Activated T-helper 1 cell treated with anti-CD3 and anti-CD28 coated beads, Interleukin-12 subunit alpha, Interleukin-12 subunit beta, Interleukin-2, Interleukin-4 antibody, amounts not matched to agents 30 ng/mL and 10 ng/mL and 1 ng/mL, durations not matched to agents 14 hours and 24 hours and 36 hours (primary cell): ENCODE measurements at regions of chr1 and their contacts with region 1.

Region 1: GRCh38 chr1:214584805-214585766 is 17.9 kb upstream of the CENPF start:
- DNase-seq: no peak
- H3K4me3 Mint-ChIP-seq: no peak overlapping the region
- H3K27ac Mint-ChIP-seq: no peak overlapping the region
- H3K4me1 Mint-ChIP-seq: peaks cover 10% of the 10 kb centered on the region
- H3K27me3 Mint-ChIP-seq: peaks cover 3% of the 10 kb centered on the region

Region 2: DNA sequence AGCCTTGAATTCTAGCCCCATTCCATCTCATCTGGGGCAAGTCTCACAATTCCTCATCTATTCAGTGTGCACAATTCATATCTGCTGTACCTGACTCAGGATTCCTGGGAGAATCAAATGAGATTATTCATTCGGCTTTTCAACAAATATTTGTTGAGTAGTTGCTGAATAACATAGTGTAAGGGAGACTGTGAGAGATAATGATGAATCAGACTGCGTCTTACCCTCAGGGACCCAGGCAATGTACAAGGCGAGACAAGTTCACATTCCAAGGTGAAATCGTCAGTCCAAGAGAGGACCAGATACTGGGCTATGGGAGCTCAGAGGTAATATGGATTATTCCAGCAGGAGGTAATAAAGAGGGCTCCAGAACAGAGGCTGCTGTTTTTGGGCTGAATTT is 371.9 kb before region 1 on chr1:
- intact Hi-C with region 1: loop called (anchors 2 kb)
- DNase-seq: no peak
- H3K4me3 Mint-ChIP-seq: no peak overlapping the region
- H3K27ac Mint-ChIP-seq: no peak overlapping the region
- H3K4me1 Mint-ChIP-seq: no peaks in the 10 kb centered on the region
- H3K27me3 Mint-ChIP-seq: peaks cover 20% of the 10 kb centered on the region

Region 3: GRCh38 chr1:214261206-214262123 is 323.6 kb before region 1 on chr1:
- intact Hi-C with region 1: loop called (anchors 1 kb)
- DNase-seq: peak; percentile 69
- H3K4me3 Mint-ChIP-seq: no peak overlapping the region
- H3K27ac Mint-ChIP-seq: no peak overlapping the region
- H3K4me1 Mint-ChIP-seq: peaks cover 27% of the 10 kb centered on the region
- H3K27me3 Mint-ChIP-seq: peaks cover 42% of the 10 kb centered on the region

Region 4: GRCh38 chr1:214386747-214387146 is 198.3 kb before region 1 on chr1:
- intact Hi-C with region 1: loop called (anchors 1 kb)
- DNase-seq: peak; percentile 27
- H3K4me3 Mint-ChIP-seq: peak overlapping the region; percentile 64
- H3K27ac Mint-ChIP-seq: peak overlapping the region; percentile 93
- H3K4me1 Mint-ChIP-seq: peaks cover 40% of the 10 kb centered on the region
- H3K27me3 Mint-ChIP-seq: peaks cover 1% of the 10 kb centered on the region

Region 5: GRCh38 chr1:214551436-214552173 is 33.5 kb before region 1 on chr1 and contains the start of gene PTPN14:
- intact Hi-C with region 1: loop called (anchors 2 kb)
- DNase-seq: no peak
- H3K4me3 Mint-ChIP-seq: peak within 1 kb of the TSS; percentile 89
- H3K27ac Mint-ChIP-seq: peak within 1 kb of the TSS; percentile 71
- H3K4me1 Mint-ChIP-seq: peaks cover 9% of the 10 kb centered on the region
- H3K27me3 Mint-ChIP-seq: peaks cover 51% of the 10 kb centered on the region
- total RNA-seq, gene PTPN14: 20.6 and 23.1 TPM in 2 replicates